Activated CD4-positive, alpha-beta memory T cell treated with anti-CD3 and anti-CD28 coated beads, Interleukin-2, amount 10 ng/mL, durations not matched to agents 7 days and 5 days (primary cell): ENCODE measurements at regions of chr10 and their contacts with region 1.

Region 1: DNA sequence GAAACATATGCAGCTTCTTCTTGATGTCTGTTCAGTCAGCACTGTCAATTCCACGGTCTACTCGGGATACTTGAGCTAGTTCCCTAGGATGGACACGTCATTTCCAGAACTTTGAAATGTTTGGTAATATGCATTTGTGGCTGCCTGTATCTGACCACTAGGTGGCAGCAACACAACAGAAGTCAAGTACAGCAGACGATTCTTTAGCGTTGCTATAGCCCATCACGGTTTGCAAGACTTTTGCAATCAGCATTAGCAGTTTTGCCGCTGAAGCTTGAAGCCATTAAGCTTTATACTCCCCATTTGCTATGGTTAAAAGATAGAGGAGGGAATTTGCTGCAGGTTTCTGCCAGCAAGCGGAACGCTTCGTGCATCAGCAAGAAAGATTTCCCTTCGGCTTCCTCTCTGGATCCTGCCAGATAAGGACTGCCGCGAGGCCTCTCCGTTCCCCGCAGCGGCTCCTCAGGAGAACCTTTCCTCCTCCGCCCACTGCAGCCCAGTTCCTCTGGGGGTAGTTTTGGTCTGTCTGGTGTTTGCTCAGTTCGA is 63.5 kb downstream of the ABCC2 start:
- DNase-seq: peak; percentile 75
- H3K4me3 Mint-ChIP-seq: peak overlapping the region; percentile 11
- H3K27ac Mint-ChIP-seq: no peak overlapping the region
- H3K4me1 Mint-ChIP-seq: peaks cover 9% of the 10 kb centered on the region
- H3K27me3 Mint-ChIP-seq: no peaks in the 10 kb centered on the region

Region 2: GRCh38 chr10:99827936-99828335 is 18.0 kb before region 1 on chr10:
- CTCF ChIA-PET with region 1: interaction called, 17 read pairs
- POLR2A ChIA-PET with region 1: no interaction called
- DNase-seq: no peak
- H3K4me3 Mint-ChIP-seq: no peak overlapping the region
- H3K27ac Mint-ChIP-seq: peak overlapping the region; percentile 81
- H3K4me1 Mint-ChIP-seq: peaks cover 28% of the 10 kb centered on the region
- H3K27me3 Mint-ChIP-seq: no peaks in the 10 kb centered on the region

Region 3: DNA sequence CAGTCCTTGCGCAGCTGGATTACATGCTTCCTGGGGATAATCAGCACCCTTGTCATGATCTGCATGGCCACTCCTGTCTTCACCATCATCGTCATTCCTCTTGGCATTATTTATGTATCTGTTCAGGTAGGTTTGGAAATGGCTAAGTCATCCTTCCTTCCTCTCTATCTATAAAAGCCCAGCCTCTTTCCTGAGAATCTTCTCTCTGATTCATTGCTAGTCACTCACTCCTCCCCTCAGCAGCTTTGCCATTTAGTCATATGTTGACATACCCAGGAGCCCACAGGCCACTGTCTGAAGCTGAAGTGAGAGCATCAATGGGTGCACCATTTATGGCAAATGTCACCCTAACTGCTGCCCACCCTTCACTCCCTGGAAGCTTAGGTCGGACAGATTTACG is 11.5 kb before region 1 on chr10:
- CTCF ChIA-PET with region 1: interaction called, 17 read pairs
- POLR2A ChIA-PET with region 1: no interaction called
- DNase-seq: no peak
- H3K4me3 Mint-ChIP-seq: no peak overlapping the region
- H3K27ac Mint-ChIP-seq: no peak overlapping the region
- H3K4me1 Mint-ChIP-seq: peaks cover 24% of the 10 kb centered on the region
- H3K27me3 Mint-ChIP-seq: no peaks in the 10 kb centered on the region

Region 4: DNA sequence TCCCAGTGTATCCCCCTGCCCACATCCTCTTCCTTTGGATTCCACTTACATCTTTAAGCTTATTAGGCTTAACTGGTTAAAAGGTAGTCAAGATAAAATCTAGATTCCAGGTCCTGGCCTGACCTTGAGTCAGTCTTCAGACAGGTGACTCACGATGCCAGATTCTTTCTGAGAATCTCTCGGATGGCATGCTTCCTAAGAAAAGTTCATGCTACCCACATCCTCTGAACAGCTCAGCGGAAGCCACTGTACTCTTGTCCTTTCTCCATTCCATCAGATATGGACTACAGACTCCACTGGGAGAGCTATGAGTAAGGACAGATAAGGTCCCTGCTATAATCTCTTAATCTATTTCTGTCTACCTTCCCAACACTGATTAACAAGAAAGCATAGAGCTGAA is 120.4 kb after region 1 on chr10:
- CTCF ChIA-PET with region 1: interaction called, 10 read pairs
- POLR2A ChIA-PET with region 1: no interaction called
- DNase-seq: peak; percentile 18
- H3K4me3 Mint-ChIP-seq: no peak overlapping the region
- H3K27ac Mint-ChIP-seq: peak overlapping the region; percentile 47
- H3K4me1 Mint-ChIP-seq: peaks cover 11% of the 10 kb centered on the region
- H3K27me3 Mint-ChIP-seq: no peaks in the 10 kb centered on the region

Region 5: DNA sequence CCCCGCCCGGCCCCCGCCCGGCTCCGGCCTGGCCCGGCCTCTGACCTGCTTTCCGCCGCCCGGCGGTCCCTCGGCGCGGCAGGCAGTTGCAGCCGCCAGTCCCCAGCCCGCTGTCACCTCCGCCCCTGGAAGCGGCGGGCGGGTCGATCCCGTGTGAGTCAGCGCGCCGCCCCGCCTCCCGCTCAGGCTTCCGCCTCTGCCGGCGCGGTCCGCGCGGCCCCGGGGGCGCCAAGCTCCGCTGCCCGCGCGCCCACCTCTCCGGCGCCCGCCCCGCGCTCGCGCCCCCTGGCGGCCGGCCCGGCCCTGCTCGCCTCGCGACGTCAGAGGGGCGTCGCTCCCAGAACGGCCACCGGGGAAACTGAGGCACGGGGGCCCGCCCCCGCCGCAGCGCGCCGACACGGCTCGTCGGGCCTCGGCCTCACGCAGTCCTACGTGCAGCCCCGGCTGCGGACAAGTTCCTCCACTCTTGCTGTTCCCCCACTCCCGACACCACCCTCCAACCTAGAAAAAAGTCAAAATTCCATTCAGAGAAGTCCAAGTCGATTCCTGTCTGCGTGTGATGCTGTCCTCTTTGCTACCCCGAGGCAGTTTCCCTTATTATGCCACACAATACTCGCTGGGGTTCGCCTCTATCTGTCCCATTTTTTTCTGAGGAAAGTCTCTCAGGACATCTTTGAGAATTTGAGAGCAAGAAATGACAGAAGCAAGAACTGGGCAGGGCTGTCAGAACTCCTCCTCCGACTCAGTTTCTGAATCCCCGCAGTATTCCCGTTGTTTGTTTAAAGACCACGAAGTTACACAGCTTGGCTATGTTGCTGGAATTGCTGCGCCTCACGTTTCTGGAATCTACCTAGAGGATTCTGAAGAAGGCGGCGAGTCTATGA is 164.1 kb after region 1 on chr10 and contains the start of gene DNMBP:
- CTCF ChIA-PET with region 1: interaction called, 22 read pairs
- POLR2A ChIA-PET with region 1: interaction called, 9 read pairs
- DNase-seq: peak; percentile 83
- H3K4me3 Mint-ChIP-seq: peak within 1 kb of the TSS; percentile 83
- H3K27ac Mint-ChIP-seq: no peak within 1 kb of the TSS
- H3K4me1 Mint-ChIP-seq: peaks cover 49% of the 10 kb centered on the region
- H3K27me3 Mint-ChIP-seq: peaks cover 25% of the 10 kb centered on the region
- total RNA-seq, gene DNMBP: 4.8 to 5.1 TPM

Region 6: GRCh38 chr10:100046021-100046486 is 200.1 kb after region 1 on chr10:
- CTCF ChIA-PET with region 1: interaction called, 163 read pairs
- POLR2A ChIA-PET with region 1: interaction called, 7 read pairs
- DNase-seq: peak; percentile 82
- H3K4me3 Mint-ChIP-seq: no peak overlapping the region
- H3K27ac Mint-ChIP-seq: no peak overlapping the region
- H3K4me1 Mint-ChIP-seq: peaks cover 2% of the 10 kb centered on the region
- H3K27me3 Mint-ChIP-seq: peaks cover 16% of the 10 kb centered on the region

Region 7: GRCh38 chr10:100065084-100065660 is 219.3 kb after region 1 on chr10:
- CTCF ChIA-PET with region 1: no interaction called
- POLR2A ChIA-PET with region 1: no interaction called
- DNase-seq: no peak
- H3K4me3 Mint-ChIP-seq: no peak overlapping the region
- H3K27ac Mint-ChIP-seq: no peak overlapping the region
- H3K4me1 Mint-ChIP-seq: no peaks in the 10 kb centered on the region
- H3K27me3 Mint-ChIP-seq: peaks cover 13% of the 10 kb centered on the region

Region 8: GRCh38 chr10:100100651-100101184 is 254.8 kb after region 1 on chr10:
- CTCF ChIA-PET with region 1: no interaction called
- POLR2A ChIA-PET with region 1: no interaction called
- DNase-seq: no peak
- H3K4me3 Mint-ChIP-seq: no peak overlapping the region
- H3K27ac Mint-ChIP-seq: no peak overlapping the region
- H3K4me1 Mint-ChIP-seq: no peaks in the 10 kb centered on the region
- H3K27me3 Mint-ChIP-seq: peaks cover 51% of the 10 kb centered on the region